ENCODE measurements at regions of chr2 and their contacts with region 1.

Region 1: GRCh38 chr2:226791487-226792081 is 8.0 kb downstream of the IRS1 start:
- DNase-seq: peak; percentile 38
- H3K4me3 ChIP-seq: peak overlapping the region; percentile 60 to 78 (median 66)
- H3K27ac ChIP-seq: peak overlapping the region; percentile 88 to 97 (median 96)
- H3K4me1 ChIP-seq: peaks cover 13 to 76% (median 18%) of the 10 kb centered on the region in 3 donors
- H3K27me3 ChIP-seq: no peaks in the 10 kb centered on the region
- CTCF ChIP-seq: peak; percentile 23 to 84 (median 58)
- POLR2A ChIP-seq: peak in 2 of 4 donors; percentile 65 to 83

Region 2: DNA sequence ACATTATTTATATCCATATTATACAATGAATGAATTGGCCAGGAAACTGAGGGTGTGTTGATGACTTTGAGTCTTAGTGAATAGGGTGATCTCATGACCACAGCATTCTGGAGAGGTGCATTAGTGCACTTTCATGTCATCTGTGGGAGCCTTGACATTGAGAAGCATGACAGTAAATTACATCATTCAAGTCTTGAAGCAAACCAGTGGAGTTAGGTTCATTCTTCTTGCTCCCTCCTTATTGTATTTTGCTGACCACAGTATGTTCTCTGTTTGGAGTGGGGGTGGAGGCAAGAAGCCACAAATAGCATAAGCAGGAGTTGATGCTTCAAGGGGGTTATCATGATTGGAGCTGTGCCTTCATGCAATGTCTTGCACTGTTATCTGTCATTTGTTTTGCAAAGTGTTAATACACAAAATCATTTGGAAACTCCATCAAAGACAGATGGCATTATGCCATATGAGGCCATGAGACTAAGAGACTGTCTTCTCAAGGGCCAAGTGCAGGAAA is 711.9 kb before region 1 on chr2:
- intact Hi-C with region 1: no loop called
- DNase-seq: no peak
- H3K4me3 ChIP-seq: no peak overlapping the region
- H3K27ac ChIP-seq: no peak overlapping the region
- H3K4me1 ChIP-seq: no peaks in the 10 kb centered on the region
- H3K27me3 ChIP-seq: no peaks in the 10 kb centered on the region
- CTCF ChIP-seq: no peak
- POLR2A ChIP-seq: no peak

Region 3: GRCh38 chr2:226215902-226216503 is 575.6 kb before region 1 on chr2:
- intact Hi-C with region 1: loop called (anchors 10 kb)
- DNase-seq: no peak
- H3K4me3 ChIP-seq: no peak overlapping the region
- H3K27ac ChIP-seq: no peak overlapping the region
- H3K4me1 ChIP-seq: peaks cover 0 to 5% (median 0%) of the 10 kb centered on the region in 3 donors
- H3K27me3 ChIP-seq: no peaks in the 10 kb centered on the region
- CTCF ChIP-seq: peak in 5 of 6 experiments; percentile 40 to 72 (median 52)
- POLR2A ChIP-seq: no peak

Region 4: GRCh38 chr2:226649871-226650660 is 141.5 kb before region 1 on chr2:
- intact Hi-C with region 1: loop called (anchors 10 kb)
- DNase-seq: peak; percentile 6
- H3K4me3 ChIP-seq: peak overlapping the region in 1 of 4 donors; percentile 3
- H3K27ac ChIP-seq: peak overlapping the region; percentile 65 to 86 (median 76)
- H3K4me1 ChIP-seq: peaks cover 15 to 32% (median 19%) of the 10 kb centered on the region in 3 donors
- H3K27me3 ChIP-seq: peaks cover 0 to 28% (median 0%) of the 10 kb centered on the region in 4 donors
- CTCF ChIP-seq: peak in 1 of 6 experiments; percentile 10
- POLR2A ChIP-seq: no peak

Measured in esophagus squamous epithelium (tissue), 5 donors.